Activated B cell treated with CpG ODN at 0.5 μM for 24 hours (primary cell): ENCODE measurements at regions of chr15 and their contacts with region 1.

Region 1: DNA sequence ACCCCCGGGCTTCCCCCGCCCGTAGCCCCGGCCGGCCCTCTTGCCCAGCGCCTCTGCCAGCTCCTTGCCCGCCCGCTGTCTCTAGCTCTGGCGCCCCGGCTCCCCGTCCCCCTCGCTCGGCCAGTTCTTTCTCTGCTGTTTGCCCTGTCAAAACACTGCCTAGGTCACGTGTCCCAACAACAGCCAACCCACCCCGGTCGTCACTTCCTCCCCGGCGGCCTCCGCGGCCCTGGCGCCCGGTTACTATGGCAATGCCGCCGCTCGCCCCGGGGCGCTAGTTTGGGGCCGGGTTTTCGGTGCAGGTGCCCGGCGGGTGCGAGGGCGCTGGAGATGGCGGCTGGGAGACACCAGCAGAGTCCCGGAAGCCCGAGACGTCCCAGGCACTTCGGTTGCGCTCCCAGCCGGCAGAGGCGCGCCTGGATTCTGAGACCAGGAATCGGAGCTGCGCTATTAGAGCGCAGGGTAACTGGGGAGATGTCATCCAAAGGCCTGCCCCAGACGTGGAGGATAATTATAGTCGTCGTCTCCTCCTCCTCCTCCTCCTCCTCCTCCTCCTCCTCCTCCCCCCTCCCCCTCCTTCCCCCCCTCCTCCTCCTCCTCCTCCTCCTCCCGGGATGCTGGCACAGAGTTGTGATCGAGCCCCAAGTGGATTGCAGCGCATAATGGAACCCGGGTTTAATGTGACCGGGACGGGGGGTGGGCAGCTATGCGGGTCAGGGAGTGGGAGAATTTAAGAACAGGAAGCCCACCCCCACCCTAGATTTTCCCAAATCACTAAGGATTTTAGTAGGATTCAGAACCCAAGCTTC is at the start of gene ATOSA:
- DNase-seq: peak; percentile 92
- ATAC-seq: peak; percentile 58
- H3K4me3 Mint-ChIP-seq: peak within 1 kb of the TSS; percentile 100
- H3K27ac Mint-ChIP-seq: peak within 1 kb of the TSS; percentile 98
- H3K4me1 Mint-ChIP-seq: peaks cover 77% of the 10 kb centered on the region
- H3K27me3 Mint-ChIP-seq: no peaks in the 10 kb centered on the region
- CTCF ChIP-seq: no peak
- total RNA-seq, gene ATOSA: 73.8 and 96.8 TPM in 2 replicates

Region 2: DNA sequence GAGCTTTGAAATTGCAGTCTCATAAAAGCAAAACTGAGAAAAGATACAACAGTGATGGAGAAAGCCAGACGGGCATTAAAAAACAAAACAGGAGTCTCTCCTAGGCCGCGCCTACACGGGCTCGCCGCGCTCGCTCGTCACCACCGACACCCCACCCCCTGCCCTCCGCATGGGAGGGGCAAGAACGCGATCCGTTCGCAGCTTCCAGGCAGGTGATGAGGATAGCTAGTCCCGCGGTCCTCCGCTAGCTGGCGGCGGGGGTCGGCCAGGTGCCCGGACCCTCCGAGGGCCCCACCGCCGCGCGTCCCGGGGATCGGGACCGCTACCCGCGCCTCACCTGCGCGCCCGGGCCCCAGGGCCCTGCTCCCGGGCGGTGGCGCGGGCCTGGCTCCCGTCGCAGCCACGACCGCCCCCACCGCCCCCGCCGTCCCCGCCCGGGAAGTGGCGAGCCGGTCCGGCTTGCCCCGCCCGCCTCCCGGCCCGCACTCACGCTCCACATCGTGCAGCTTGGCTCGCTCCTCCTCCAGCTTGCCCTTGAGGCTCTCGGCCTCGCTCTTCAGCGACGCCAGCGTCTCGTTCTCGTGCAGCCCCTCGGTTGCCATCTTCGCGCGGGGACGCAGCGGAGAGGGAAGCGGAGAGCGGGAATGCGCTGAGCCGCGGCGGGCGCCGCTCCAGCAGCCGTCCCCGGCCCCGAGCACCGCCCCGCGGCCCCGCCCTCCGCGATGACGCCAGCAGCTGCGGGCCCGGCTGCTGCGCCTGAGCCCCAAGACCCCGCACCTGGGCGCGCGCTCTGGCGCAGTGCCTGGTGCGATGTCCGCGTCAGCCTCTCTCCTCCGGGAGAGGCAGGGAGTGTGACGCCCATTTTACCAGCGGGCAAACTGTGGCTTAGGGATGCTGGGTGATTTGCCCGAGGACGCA is 499.9 kb before region 1 on chr15:
- CTCF ChIA-PET with region 1: no interaction called
- POLR2A ChIA-PET with region 1: interaction called, 3 read pairs
- intact Hi-C with region 1: loop called (anchors 2 kb)
- DNase-seq: peak; percentile 95
- ATAC-seq: peak; percentile 80
- H3K4me3 Mint-ChIP-seq: peak overlapping the region; percentile 98
- H3K27ac Mint-ChIP-seq: peak overlapping the region; percentile 99
- H3K4me1 Mint-ChIP-seq: peaks cover 58% of the 10 kb centered on the region
- H3K27me3 Mint-ChIP-seq: no peaks in the 10 kb centered on the region
- CTCF ChIP-seq: no peak

Region 3: DNA sequence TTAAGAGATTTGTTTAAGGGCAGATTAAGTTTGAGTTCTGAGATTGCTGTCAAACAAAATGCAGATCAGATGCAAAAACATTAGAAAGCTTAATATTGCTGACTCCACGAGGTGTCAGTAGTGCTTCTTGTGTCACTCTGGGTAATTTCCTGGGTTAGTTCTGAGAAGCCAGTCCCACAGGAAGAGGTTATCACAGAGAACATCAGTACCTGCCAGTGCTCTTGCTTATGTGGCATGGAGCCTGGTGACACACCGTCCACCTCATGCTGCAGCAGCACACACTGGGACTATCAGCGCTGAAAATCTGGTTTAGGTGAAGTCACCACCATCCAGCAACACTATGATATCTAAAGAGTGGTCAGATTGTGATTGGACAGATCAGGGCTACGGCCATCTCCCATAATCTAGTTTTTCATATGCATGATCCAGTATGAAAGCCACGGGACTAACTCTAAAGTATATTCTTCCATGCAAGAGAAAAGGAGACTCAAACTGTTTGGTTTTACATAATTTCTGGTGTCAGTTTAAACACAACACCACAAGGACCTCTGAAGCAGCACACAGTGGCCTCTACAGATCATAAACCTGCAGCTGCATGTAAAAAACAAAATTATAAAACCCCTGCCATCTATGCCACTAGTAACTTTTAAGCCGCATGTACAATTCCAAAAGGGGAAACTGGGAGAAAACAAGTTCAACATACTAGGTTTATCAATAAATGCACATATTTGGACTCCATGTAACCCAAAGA is 347.8 kb before region 1 on chr15:
- CTCF ChIA-PET with region 1: interaction called, 3 read pairs
- POLR2A ChIA-PET with region 1: no interaction called
- intact Hi-C with region 1: loop called (anchors 2 kb)
- DNase-seq: no peak
- ATAC-seq: peak; percentile 99
- H3K4me3 Mint-ChIP-seq: no peak overlapping the region
- H3K27ac Mint-ChIP-seq: peak overlapping the region; percentile 15
- H3K4me1 Mint-ChIP-seq: peaks cover 13% of the 10 kb centered on the region
- H3K27me3 Mint-ChIP-seq: no peaks in the 10 kb centered on the region
- CTCF ChIP-seq: no peak

Region 4: GRCh38 chr15:52537459-52537858 is 142.0 kb before region 1 on chr15:
- CTCF ChIA-PET with region 1: no interaction called
- POLR2A ChIA-PET with region 1: no interaction called
- intact Hi-C with region 1: no loop called
- DNase-seq: no peak
- ATAC-seq: no peak
- H3K4me3 Mint-ChIP-seq: no peak overlapping the region
- H3K27ac Mint-ChIP-seq: no peak overlapping the region
- H3K4me1 Mint-ChIP-seq: no peaks in the 10 kb centered on the region
- H3K27me3 Mint-ChIP-seq: peaks cover 3% of the 10 kb centered on the region
- CTCF ChIP-seq: no peak

Region 5: DNA sequence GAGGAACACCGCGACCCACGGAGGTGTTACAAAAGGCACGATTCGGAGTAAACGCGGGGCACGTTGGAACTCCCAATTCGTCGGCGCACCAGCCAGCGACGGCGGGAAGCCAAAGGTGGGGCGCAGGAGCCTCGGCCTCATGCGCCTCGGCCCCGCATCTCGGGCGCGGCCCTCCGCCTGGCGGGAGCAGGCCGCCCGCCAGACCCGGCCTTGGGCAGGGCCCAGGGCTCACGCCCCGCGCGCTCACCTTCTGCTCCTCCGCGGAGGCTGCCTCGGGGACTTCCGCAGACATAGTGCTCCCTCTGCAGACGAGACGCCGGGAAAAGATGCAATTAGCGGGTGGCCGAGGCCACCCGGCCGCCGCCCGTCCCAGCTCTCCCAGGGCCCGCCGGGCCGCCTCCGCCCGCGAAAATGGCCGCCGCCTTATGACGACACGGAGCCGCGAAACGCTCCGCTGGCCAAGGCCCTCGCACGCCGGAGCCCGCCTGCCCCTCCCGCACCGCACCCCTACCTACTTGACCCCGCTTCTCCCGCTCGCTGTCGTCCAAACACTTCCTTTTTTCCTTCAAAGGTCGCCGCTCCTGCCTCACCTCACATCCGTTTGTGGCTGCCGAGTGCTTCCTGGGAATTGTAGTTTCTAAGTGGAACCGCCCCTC is 110.7 kb before region 1 on chr15 and contains the start of gene ARPP19:
- CTCF ChIA-PET with region 1: no interaction called
- POLR2A ChIA-PET with region 1: interaction called, 3 read pairs
- intact Hi-C with region 1: loop called (anchors 1 kb)
- DNase-seq: peak; percentile 82
- ATAC-seq: peak; percentile 83
- H3K4me3 Mint-ChIP-seq: peak within 1 kb of the TSS; percentile 97
- H3K27ac Mint-ChIP-seq: peak within 1 kb of the TSS; percentile 100
- H3K4me1 Mint-ChIP-seq: peaks cover 49% of the 10 kb centered on the region
- H3K27me3 Mint-ChIP-seq: no peaks in the 10 kb centered on the region
- CTCF ChIP-seq: no peak
- total RNA-seq, gene ARPP19: 145 and 153 TPM in 2 replicates

Region 6: GRCh38 chr15:52668133-52668532 is 11.3 kb before region 1 on chr15:
- CTCF ChIA-PET with region 1: interaction called, 3 read pairs
- POLR2A ChIA-PET with region 1: interaction called, 13 read pairs
- intact Hi-C with region 1: loop called (anchors 1 kb)
- DNase-seq: no peak
- ATAC-seq: no peak
- H3K4me3 Mint-ChIP-seq: no peak overlapping the region
- H3K27ac Mint-ChIP-seq: peak overlapping the region; percentile 47
- H3K4me1 Mint-ChIP-seq: peaks cover 31% of the 10 kb centered on the region
- H3K27me3 Mint-ChIP-seq: no peaks in the 10 kb centered on the region
- CTCF ChIP-seq: no peak

Region 7: GRCh38 chr15:52735231-52736089 is 56.0 kb after region 1 on chr15:
- CTCF ChIA-PET with region 1: interaction called, 7 read pairs
- POLR2A ChIA-PET with region 1: interaction called, 18 read pairs
- intact Hi-C with region 1: loop called (anchors 1 kb)
- DNase-seq: no peak
- ATAC-seq: peak; percentile 84
- H3K4me3 Mint-ChIP-seq: no peak overlapping the region
- H3K27ac Mint-ChIP-seq: no peak overlapping the region
- H3K4me1 Mint-ChIP-seq: peaks cover 18% of the 10 kb centered on the region
- H3K27me3 Mint-ChIP-seq: no peaks in the 10 kb centered on the region
- CTCF ChIP-seq: no peak